ENCODE measurements at regions of chr9 and their contacts with region 1.

Region 1: DNA sequence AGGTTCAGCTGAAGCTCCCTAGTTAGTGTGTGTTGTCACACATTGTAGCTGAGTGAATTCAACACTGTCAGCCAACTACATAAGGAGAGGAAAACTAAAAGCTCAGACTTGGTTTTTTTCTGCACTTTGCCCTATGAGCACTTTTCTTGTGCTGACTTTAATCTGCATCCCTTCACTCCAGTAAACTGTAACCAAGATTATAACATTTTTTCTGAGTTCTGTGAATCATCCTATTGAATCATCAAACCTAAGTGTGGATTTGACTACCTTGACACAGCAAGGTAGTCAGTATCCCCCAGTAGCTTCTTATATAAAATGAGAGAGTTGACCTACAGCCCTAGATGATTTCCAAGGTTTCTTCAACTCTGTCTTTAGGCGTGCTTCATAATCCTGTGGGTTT is 325.0 kb downstream of the AGTPBP1 start:
- DNase-seq: no peak
- ATAC-seq: no peak
- H3K4me3 ChIP-seq: no peak overlapping the region
- H3K4me3 Mint-ChIP-seq: no peak overlapping the region
- H3K27ac ChIP-seq: no peak overlapping the region
- H3K27ac Mint-ChIP-seq: no peak overlapping the region
- H3K4me1 ChIP-seq: no peaks in the 10 kb centered on the region
- H3K4me1 Mint-ChIP-seq: no peaks in the 10 kb centered on the region
- H3K27me3 ChIP-seq: no peaks in the 10 kb centered on the region
- H3K27me3 Mint-ChIP-seq: peaks cover 9% of the 10 kb centered on the region
- CTCF ChIP-seq: no peak

Region 2: DNA sequence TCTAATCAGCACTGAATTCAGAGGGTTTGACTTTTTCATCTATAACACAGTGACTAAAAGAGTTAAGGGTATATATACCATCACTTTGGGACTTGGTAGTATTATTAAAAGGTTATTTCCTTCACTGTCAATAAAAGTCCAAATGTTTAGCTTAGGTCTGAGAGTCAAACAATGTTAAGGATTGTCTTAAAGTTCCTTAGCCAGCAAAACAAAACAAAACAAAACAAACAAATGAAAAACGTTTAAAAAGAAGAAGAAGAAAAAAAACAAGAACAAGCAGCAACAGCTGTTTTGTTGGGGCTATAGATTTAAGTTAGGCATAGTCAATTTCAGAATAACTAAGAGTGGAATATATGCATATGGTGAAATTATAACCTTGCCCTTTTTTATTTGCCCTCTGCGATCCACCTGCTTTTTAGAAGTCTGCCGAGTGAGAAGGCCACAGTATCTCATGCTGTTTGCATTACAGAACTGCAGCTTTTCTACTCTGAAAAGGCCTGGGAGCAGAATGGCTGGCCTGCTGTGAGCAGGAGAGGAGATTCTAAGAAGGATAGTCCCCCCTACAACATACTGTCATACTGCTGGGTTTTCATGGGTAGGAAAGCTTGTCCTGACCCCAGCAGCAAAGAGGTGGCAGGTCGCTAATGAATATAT is 605.5 kb before region 1 on chr9:
- CTCF ChIA-PET with region 1: no interaction called
- POLR2A ChIA-PET with region 1: no interaction called
- intact Hi-C with region 1: loop called in 1 of 2 experiments (anchors 5 kb)
- DNase-seq: no peak
- ATAC-seq: no peak
- H3K4me3 ChIP-seq: no peak overlapping the region
- H3K4me3 Mint-ChIP-seq: no peak overlapping the region
- H3K27ac ChIP-seq: no peak overlapping the region
- H3K27ac Mint-ChIP-seq: no peak overlapping the region
- H3K4me1 ChIP-seq: no peaks in the 10 kb centered on the region
- H3K4me1 Mint-ChIP-seq: no peaks in the 10 kb centered on the region
- H3K27me3 ChIP-seq: no peaks in the 10 kb centered on the region
- H3K27me3 Mint-ChIP-seq: peaks cover 6% of the 10 kb centered on the region
- CTCF ChIP-seq: no peak

Region 3: DNA sequence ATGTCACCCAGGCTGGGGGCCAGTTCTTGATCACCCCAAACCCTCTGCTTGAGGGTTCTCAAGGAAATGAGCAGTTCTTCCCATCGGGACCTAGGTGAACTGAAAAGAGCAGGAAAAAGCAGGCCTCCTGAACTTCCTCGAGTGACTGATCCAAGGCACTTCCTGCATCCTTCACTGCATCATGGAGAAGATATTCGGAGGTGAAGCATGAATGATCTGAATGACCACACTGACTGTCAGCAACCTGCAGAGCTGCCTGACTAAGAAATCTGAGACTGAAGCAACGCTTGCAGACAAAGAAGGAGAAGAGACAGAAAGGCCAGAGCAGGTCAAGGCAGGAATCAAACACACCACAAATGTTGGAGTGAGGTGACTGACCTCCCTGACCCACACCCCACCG is 95.2 kb before region 1 on chr9:
- CTCF ChIA-PET with region 1: no interaction called
- POLR2A ChIA-PET with region 1: no interaction called
- intact Hi-C with region 1: no loop called
- DNase-seq: no peak
- ATAC-seq: no peak
- H3K4me3 ChIP-seq: no peak overlapping the region
- H3K4me3 Mint-ChIP-seq: no peak overlapping the region
- H3K27ac ChIP-seq: no peak overlapping the region
- H3K27ac Mint-ChIP-seq: no peak overlapping the region
- H3K4me1 ChIP-seq: no peaks in the 10 kb centered on the region
- H3K4me1 Mint-ChIP-seq: no peaks in the 10 kb centered on the region
- H3K27me3 ChIP-seq: no peaks in the 10 kb centered on the region
- H3K27me3 Mint-ChIP-seq: peaks cover 5% of the 10 kb centered on the region
- CTCF ChIP-seq: no peak

Region 4: GRCh38 chr9:85439788-85440187 is 23.1 kb after region 1 on chr9:
- CTCF ChIA-PET with region 1: no interaction called
- POLR2A ChIA-PET with region 1: no interaction called
- intact Hi-C with region 1: no loop called
- DNase-seq: no peak
- ATAC-seq: no peak
- H3K4me3 ChIP-seq: no peak overlapping the region
- H3K4me3 Mint-ChIP-seq: no peak overlapping the region
- H3K27ac ChIP-seq: no peak overlapping the region
- H3K27ac Mint-ChIP-seq: no peak overlapping the region
- H3K4me1 ChIP-seq: no peaks in the 10 kb centered on the region
- H3K4me1 Mint-ChIP-seq: no peaks in the 10 kb centered on the region
- H3K27me3 ChIP-seq: no peaks in the 10 kb centered on the region
- H3K27me3 Mint-ChIP-seq: peaks cover 1% of the 10 kb centered on the region
- CTCF ChIP-seq: no peak

Region 5: GRCh38 chr9:85577353-85577952 is 160.7 kb after region 1 on chr9:
- CTCF ChIA-PET with region 1: no interaction called
- POLR2A ChIA-PET with region 1: no interaction called
- intact Hi-C with region 1: no loop called
- DNase-seq: no peak
- ATAC-seq: no peak
- H3K4me3 ChIP-seq: no peak overlapping the region
- H3K4me3 Mint-ChIP-seq: no peak overlapping the region
- H3K27ac ChIP-seq: no peak overlapping the region
- H3K27ac Mint-ChIP-seq: no peak overlapping the region
- H3K4me1 ChIP-seq: no peaks in the 10 kb centered on the region
- H3K4me1 Mint-ChIP-seq: no peaks in the 10 kb centered on the region
- H3K27me3 ChIP-seq: no peaks in the 10 kb centered on the region
- H3K27me3 Mint-ChIP-seq: no peaks in the 10 kb centered on the region
- CTCF ChIP-seq: no peak

Measured in CD8-positive, alpha-beta T cell (primary cell).